ENCODE measurements at regions of chr9 and their contacts with region 1.

Region 1: GRCh38 chr9:126398403-126399058 is 71.9 kb downstream of the MVB12B start:
- DNase-seq: peak; percentile 54 to 82 (median 70)
- ATAC-seq: peak in 1 of 2 donors; percentile 22
- H3K4me3 Mint-ChIP-seq: peak overlapping the region; percentile 54 to 82 (median 72)
- H3K27ac Mint-ChIP-seq: peak overlapping the region; percentile 76 to 98 (median 95)
- H3K4me1 Mint-ChIP-seq: peaks cover 31 to 71% (median 58%) of the 10 kb centered on the region in 4 donors
- H3K27me3 Mint-ChIP-seq: no peaks in the 10 kb centered on the region

Region 2: GRCh38 chr9:126235336-126236243 is 162.9 kb before region 1 on chr9:
- POLR2A ChIA-PET with region 1: no interaction called
- DNase-seq: no peak
- ATAC-seq: no peak
- H3K4me3 Mint-ChIP-seq: no peak overlapping the region
- H3K27ac Mint-ChIP-seq: no peak overlapping the region
- H3K4me1 Mint-ChIP-seq: no peaks in the 10 kb centered on the region
- H3K27me3 Mint-ChIP-seq: peaks cover 0 to 27% (median 4%) of the 10 kb centered on the region in 5 donors

Region 3: GRCh38 chr9:126317513-126317912 is 81.0 kb before region 1 on chr9:
- POLR2A ChIA-PET with region 1: interaction called, 12 read pairs
- DNase-seq: peak; percentile 35 to 83 (median 59)
- ATAC-seq: peak; percentile 95 to 99
- H3K4me3 Mint-ChIP-seq: no peak overlapping the region
- H3K27ac Mint-ChIP-seq: peak overlapping the region in 3 of 10 donors; percentile 11 to 76 (median 52)
- H3K4me1 Mint-ChIP-seq: peaks cover 9 to 23% (median 13%) of the 10 kb centered on the region in 4 donors
- H3K27me3 Mint-ChIP-seq: no peaks in the 10 kb centered on the region

Region 4: GRCh38 chr9:126326228-126327005 is 72.1 kb before region 1 on chr9 and contains the start of gene MVB12B:
- POLR2A ChIA-PET with region 1: interaction called, 31 read pairs
- DNase-seq: peak; percentile 39 to 76 (median 60)
- ATAC-seq: peak; percentile 69 to 73
- H3K4me3 Mint-ChIP-seq: peak within 1 kb of the TSS; percentile 81 to 92 (median 88)
- H3K27ac Mint-ChIP-seq: peak within 1 kb of the TSS; percentile 90 to 97 (median 96)
- H3K4me1 Mint-ChIP-seq: peaks cover 29 to 51% (median 44%) of the 10 kb centered on the region in 4 donors
- H3K27me3 Mint-ChIP-seq: no peaks in the 10 kb centered on the region
- polyA plus RNA-seq, gene MVB12B: 7.2 to 12.5 (median 8.0) TPM

Region 5: DNA sequence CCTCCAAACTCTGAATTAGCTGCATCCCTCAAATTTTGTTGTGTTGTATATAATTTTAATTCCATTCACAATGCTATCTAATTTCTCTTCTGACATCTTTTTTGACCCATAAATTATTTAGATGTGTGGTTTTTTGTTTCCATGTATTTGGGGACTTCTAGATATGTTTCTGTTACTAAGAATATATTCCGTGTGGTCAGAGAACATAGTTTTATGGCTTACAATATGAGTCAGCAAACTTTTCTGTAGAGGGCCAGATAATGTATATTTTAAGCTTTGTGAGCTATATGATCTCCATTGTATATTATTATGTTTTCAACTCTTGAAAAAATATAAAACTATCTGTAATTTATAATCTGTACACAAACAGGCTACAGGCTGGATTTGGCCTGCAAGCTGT is 38.5 kb before region 1 on chr9:
- POLR2A ChIA-PET with region 1: no interaction called
- DNase-seq: no peak
- ATAC-seq: no peak
- H3K4me3 Mint-ChIP-seq: no peak overlapping the region
- H3K27ac Mint-ChIP-seq: peak overlapping the region in 1 of 10 donors; percentile 51
- H3K4me1 Mint-ChIP-seq: peaks cover 2 to 29% (median 16%) of the 10 kb centered on the region in 4 donors
- H3K27me3 Mint-ChIP-seq: no peaks in the 10 kb centered on the region

Region 6: DNA sequence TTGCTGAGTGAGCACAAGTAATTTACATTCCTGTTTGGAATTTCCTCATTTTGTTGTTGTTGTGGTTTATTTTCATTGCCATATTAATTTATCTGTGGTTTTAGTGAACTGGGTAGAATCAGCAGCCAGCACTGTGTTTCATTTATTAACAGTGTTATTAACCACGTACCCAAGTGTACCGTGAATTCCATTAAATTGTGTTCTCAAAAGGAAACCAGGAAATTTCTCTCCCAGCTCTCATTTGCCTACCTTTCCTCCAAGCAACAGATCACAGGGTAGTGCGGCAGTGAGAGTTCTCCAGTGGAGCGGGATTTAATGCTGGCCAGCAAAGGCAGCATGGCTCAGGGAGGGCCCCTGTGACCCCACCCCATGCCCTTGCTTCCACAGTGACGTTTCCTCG is 17.3 kb before region 1 on chr9:
- POLR2A ChIA-PET with region 1: no interaction called
- DNase-seq: no peak
- ATAC-seq: no peak
- H3K4me3 Mint-ChIP-seq: no peak overlapping the region
- H3K27ac Mint-ChIP-seq: no peak overlapping the region
- H3K4me1 Mint-ChIP-seq: peaks cover 0 to 17% (median 12%) of the 10 kb centered on the region in 4 donors
- H3K27me3 Mint-ChIP-seq: no peaks in the 10 kb centered on the region

Region 7: DNA sequence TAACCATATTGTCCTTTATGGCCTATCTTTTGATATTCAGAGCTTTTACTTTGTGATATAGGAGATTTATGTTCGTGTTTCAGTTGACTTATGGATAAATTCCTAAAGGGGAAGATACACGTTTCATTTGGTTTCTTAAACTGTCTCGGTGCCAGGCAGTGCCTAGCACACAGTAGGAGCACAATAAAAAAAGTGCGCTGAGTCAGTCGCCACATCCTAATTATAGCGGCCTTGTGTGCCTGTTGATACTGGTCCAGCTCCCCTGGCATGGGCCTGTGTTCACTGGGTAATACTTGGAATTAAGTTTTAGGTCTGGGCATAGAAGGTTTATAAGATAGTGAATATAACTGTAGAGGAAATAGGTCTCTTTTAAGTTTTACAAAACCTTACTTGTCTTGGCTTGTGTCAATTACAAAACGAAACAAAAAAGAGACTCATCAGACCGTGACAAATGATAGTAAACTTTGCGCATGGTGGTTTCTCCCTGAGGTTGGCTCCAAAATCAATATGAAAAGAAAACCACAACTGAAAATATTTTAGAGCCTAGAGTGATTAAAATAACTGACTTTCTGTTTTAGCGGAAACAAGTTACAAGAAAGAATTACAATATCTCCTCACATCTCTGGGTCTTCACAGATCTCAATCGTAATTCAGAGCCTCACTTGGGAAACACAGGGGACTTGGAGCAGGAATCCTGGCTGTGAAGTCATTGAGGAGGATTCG is 12.9 kb after region 1 on chr9:
- POLR2A ChIA-PET with region 1: interaction called, 12 read pairs
- DNase-seq: peak in 7 of 10 donors; percentile 16 to 89 (median 62)
- ATAC-seq: peak; percentile 93 to 96
- H3K4me3 Mint-ChIP-seq: peak overlapping the region; percentile 74 to 90 (median 84)
- H3K27ac Mint-ChIP-seq: peak overlapping the region; percentile 84 to 96 (median 92)
- H3K4me1 Mint-ChIP-seq: peaks cover 35 to 75% (median 56%) of the 10 kb centered on the region in 4 donors
- H3K27me3 Mint-ChIP-seq: no peaks in the 10 kb centered on the region

Region 8: GRCh38 chr9:126471084-126471624 is 72.6 kb after region 1 on chr9:
- POLR2A ChIA-PET with region 1: interaction called, 10 read pairs
- DNase-seq: peak; percentile 20 to 82 (median 72)
- ATAC-seq: peak; percentile 75 to 76
- H3K4me3 Mint-ChIP-seq: peak overlapping the region; percentile 66 to 86 (median 80)
- H3K27ac Mint-ChIP-seq: peak overlapping the region; percentile 87 to 96 (median 95)
- H3K4me1 Mint-ChIP-seq: peaks cover 59 to 93% (median 90%) of the 10 kb centered on the region in 4 donors
- H3K27me3 Mint-ChIP-seq: no peaks in the 10 kb centered on the region

Measured in naive thymus-derived CD8-positive, alpha-beta T cell (primary cell).